IMR-90 (cell line): ENCODE measurements at regions of chr1 and their contacts with region 1.

Region 1: GRCh38 chr1:218537122-218537904 is 192.2 kb downstream of the TGFB2 start:
- DNase-seq: peak; percentile 83
- ATAC-seq: peak; percentile 88
- H3K4me3 ChIP-seq: no peak overlapping the region
- H3K27ac ChIP-seq: peak overlapping the region; percentile 59
- H3K4me1 ChIP-seq: peaks cover 8% of the 10 kb centered on the region
- H3K27me3 ChIP-seq: no peaks in the 10 kb centered on the region
- CTCF ChIP-seq: no peak
- POLR2A ChIP-seq: no peak
- RAD21 ChIP-seq: no peak

Region 2: GRCh38 chr1:217431393-217431792 is 1105.9 kb before region 1 on chr1:
- CTCF ChIA-PET with region 1: no interaction called
- POLR2A ChIA-PET with region 1: no interaction called
- dilution Hi-C with region 1: no loop called
- in situ Hi-C with region 1: no loop called
- intact Hi-C with region 1: no loop called
- DNase-seq: no peak
- ATAC-seq: no peak
- H3K4me3 ChIP-seq: no peak overlapping the region
- H3K27ac ChIP-seq: no peak overlapping the region
- H3K4me1 ChIP-seq: no peaks in the 10 kb centered on the region
- H3K27me3 ChIP-seq: no peaks in the 10 kb centered on the region
- CTCF ChIP-seq: no peak
- POLR2A ChIP-seq: no peak
- RAD21 ChIP-seq: 0 out of 2 replicates have a peak, but pooled peaks have one; percentile 7

Region 3: DNA sequence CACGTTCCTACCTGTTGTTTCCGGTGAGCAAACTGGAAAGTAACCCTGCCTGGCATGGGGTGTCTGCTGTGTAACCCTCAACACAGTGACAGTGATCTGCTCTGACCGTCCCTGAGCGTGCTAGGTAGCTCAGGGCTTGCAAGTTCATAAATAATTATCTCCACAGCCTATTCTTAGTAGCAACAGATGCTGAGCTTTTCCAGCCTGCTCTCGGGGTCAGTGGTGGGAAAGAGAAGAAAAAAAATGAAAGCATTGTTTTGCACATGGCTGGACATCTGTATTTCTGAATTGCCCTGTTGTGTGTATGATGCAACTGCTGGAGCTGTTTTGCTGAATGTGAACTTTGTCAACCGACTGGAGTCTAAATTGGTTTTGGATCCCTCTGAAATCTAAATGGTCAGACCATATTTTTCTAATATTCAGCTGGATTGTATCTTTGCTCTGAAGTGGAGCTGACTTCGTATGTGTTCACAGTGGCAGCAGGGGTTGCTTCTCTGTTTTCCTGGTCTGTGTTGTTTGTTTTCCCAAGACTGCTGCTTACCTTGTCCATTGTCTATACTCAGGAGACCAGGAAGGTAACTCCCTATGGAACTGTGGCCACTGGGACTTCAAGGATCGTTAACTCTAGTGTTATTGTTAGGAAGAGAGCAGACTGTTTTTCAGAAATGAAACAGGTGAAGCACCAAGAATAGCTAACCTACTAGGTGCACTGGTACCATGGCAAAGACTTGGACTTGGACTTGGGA is 165.2 kb before region 1 on chr1:
- CTCF ChIA-PET with region 1: no interaction called
- POLR2A ChIA-PET with region 1: no interaction called
- dilution Hi-C with region 1: no loop called
- in situ Hi-C with region 1: no loop called
- intact Hi-C with region 1: loop called (anchors 5 kb)
- DNase-seq: peak; percentile 59
- ATAC-seq: no peak
- H3K4me3 ChIP-seq: no peak overlapping the region
- H3K27ac ChIP-seq: peak overlapping the region; percentile 22; the same call in 1 of the 2 replicates
- H3K4me1 ChIP-seq: peaks cover 31% of the 10 kb centered on the region
- H3K27me3 ChIP-seq: no peaks in the 10 kb centered on the region
- CTCF ChIP-seq: no peak
- POLR2A ChIP-seq: no peak
- RAD21 ChIP-seq: no peak

Region 4: GRCh38 chr1:219173758-219174588 is 636.7 kb after region 1 on chr1 and contains the start of gene LYPLAL1:
- CTCF ChIA-PET with region 1: no interaction called
- POLR2A ChIA-PET with region 1: no interaction called
- dilution Hi-C with region 1: no loop called
- in situ Hi-C with region 1: no loop called
- intact Hi-C with region 1: loop called (anchors 10 kb)
- DNase-seq: peak; percentile 89
- ATAC-seq: peak; percentile 93
- H3K4me3 ChIP-seq: peak within 1 kb of the TSS; percentile 59
- H3K27ac ChIP-seq: peak within 1 kb of the TSS; percentile 93
- H3K4me1 ChIP-seq: peaks cover 6% of the 10 kb centered on the region
- H3K27me3 ChIP-seq: no peaks in the 10 kb centered on the region
- CTCF ChIP-seq: no peak
- POLR2A ChIP-seq: peak; percentile 75
- RAD21 ChIP-seq: no peak
- total RNA-seq, gene LYPLAL1: 4.8 and 11.4 TPM in 2 replicates